Lower leg skin (tissue), 4 donors: ENCODE measurements at regions of chr5 and their contacts with region 1.

Region 1: GRCh38 chr5:100838048-100838473 is 65.0 kb downstream of the ST8SIA4 start:
- DNase-seq: no peak
- H3K4me3 ChIP-seq: no peak overlapping the region
- CTCF ChIP-seq: no peak
- POLR2A ChIP-seq: no peak

Region 2: GRCh38 chr5:99272576-99272975 is 1565.5 kb before region 1 on chr5:
- intact Hi-C with region 1: loop called (anchors 10 kb)
- DNase-seq: no peak
- H3K4me3 ChIP-seq: no peak overlapping the region
- CTCF ChIP-seq: no peak
- POLR2A ChIP-seq: no peak

Region 3: DNA sequence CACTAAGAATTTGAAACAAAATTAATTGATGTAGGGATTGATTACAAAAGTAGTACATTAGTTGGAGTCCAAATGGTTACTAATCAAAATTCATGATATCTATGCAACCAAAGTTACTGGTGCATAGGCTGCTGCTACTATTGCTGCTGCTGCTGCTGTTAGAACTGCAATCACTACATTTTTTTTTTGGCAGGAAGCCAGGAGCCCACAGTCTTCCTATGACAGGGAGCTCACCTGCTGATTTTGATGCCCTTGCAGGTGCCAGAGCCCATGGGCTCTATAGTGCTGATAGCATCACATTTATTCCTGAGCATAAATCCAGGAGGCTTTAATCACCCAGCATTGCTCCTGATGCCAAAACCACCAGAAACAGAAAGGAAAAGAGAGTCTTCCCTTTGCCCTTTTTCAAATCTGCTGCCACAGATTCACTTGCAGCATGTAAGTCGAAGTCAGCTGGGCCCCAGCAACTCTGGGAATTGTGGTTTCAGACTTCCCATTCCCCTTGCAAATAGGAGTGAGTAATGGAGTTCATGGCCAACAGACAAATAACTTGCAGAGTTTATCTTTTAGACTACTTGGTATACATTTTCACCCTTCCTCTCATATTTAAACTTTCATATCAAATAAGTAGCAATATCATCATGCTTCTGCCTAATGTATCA is 1643.1 kb after region 1 on chr5:
- intact Hi-C with region 1: no loop called
- DNase-seq: no peak
- H3K4me3 ChIP-seq: no peak overlapping the region
- CTCF ChIP-seq: no peak
- POLR2A ChIP-seq: no peak